ENCODE measurements at regions of chr1 and their contacts with region 1.

Region 1: GRCh38 chr1:222736972-222737371 is at the start of gene FAM177B:
- DNase-seq: peak; percentile 17
- H3K4me3 ChIP-seq: no peak within 1 kb of the TSS
- H3K27ac ChIP-seq: no peak within 1 kb of the TSS
- H3K4me1 ChIP-seq: peaks cover 4% of the 10 kb centered on the region
- H3K27me3 ChIP-seq: no peaks in the 10 kb centered on the region
- CTCF ChIP-seq: no peak
- total RNA-seq, gene FAM177B: not detected

Region 2: DNA sequence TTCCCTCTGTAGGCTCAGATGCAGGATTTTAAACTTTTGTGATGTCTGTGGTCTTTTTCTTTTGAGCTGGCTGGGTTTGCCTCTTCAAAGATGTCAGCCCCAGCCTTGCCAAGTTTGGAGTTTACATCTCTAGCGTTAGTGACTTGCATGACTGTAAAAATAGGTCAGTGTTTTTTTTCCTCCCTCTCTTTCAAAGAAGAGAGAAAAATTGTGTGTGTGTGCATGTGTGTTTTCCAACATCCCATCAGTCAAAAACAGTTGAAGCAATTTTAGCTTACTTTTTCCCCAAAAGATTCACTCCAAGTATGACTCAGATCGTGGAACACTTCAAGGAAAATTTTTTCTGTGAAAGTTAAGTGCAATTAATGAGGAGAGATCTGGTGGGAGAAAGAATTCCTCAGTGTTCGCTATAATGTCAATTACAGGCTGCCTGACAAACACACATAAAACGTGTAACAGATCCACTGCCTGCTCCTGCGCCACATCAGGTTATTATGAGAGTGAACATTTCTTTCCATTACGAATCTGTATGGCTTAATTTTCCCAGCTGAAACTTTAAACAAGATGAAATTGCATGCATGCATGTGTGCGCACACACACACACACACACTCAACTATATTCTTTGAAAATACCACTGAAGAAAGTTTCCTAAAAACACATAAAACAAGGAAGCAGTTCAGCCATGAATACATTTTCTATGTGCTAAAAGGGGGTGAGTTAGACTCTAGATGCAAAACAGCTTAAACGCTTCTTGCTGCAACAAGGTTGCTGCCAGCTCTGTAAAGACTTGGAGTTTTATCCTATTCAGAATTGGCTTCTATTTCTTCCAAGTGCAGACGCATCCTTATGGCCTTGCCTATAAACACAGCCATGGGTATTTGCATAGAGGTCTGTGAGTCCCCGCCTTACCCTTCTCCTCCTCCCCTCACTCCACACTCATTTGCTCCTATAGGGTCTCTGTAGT is 350.6 kb after region 1 on chr1:
- CTCF ChIA-PET with region 1: interaction called, 11 read pairs
- dilution Hi-C with region 1: no loop called
- in situ Hi-C with region 1: no loop called
- intact Hi-C with region 1: no loop called
- DNase-seq: no peak
- H3K4me3 ChIP-seq: no peak overlapping the region
- H3K27ac ChIP-seq: no peak overlapping the region
- H3K4me1 ChIP-seq: no peaks in the 10 kb centered on the region
- H3K27me3 ChIP-seq: no peaks in the 10 kb centered on the region
- CTCF ChIP-seq: no peak